ENCODE measurements at regions of chr1 and their contacts with region 1.

Region 1: GRCh38 chr1:46547481-46548383 is 3.7 kb downstream of the KNCN start:
- DNase-seq: peak; percentile 73
- H3K4me3 Mint-ChIP-seq: no peak overlapping the region
- H3K27ac Mint-ChIP-seq: no peak overlapping the region
- H3K4me1 Mint-ChIP-seq: peaks cover under 1% of the 10 kb centered on the region
- H3K27me3 Mint-ChIP-seq: peaks cover 39% of the 10 kb centered on the region
- CTCF ChIP-seq: peak; percentile 66

Region 2: DNA sequence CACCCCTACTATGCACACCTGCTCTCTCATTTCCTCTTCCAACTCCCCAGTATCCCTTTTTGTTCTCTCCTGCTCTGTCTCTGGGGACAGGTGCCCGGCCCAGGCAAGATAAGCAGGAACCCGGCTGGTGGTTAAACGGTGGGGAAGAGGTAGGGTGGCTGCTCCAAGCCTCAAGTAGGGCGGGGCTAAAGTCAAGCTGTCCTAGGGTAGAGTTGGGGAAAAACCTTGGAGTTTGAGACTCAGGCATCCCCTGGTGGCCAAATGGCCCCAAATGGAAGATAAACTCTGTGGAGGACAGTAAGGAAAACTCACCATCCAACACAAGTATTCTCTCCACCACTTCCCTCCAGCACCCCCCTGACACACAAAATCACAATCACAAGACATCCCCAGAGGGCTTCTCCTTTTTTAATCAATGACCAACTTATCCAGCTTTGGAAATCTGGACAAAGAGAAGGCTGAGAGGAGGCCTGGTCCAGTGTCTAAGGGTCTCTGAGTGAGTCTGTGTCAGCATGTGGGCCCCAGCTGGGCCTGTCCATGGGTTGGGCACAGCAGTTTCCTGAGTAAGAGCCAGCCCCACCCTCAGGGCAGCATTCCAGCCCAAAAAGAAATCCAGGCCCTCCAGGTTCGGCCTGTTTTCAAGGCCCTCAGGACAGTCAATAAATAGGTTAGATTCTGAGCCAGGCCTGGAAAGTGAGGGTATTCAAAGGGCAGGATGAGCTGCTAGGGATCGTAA is 359.3 kb before region 1 on chr1:
- CTCF ChIA-PET with region 1: no interaction called
- POLR2A ChIA-PET with region 1: no interaction called
- intact Hi-C with region 1: no loop called
- DNase-seq: no peak
- H3K4me3 Mint-ChIP-seq: no peak overlapping the region
- H3K27ac Mint-ChIP-seq: peak overlapping the region; percentile 84
- H3K4me1 Mint-ChIP-seq: peaks cover 38% of the 10 kb centered on the region
- H3K27me3 Mint-ChIP-seq: no peaks in the 10 kb centered on the region
- CTCF ChIP-seq: no peak

Region 3: GRCh38 chr1:46448109-46448911 is 99.4 kb before region 1 on chr1:
- CTCF ChIA-PET with region 1: interaction called, 62 read pairs
- POLR2A ChIA-PET with region 1: no interaction called
- intact Hi-C with region 1: loop called (anchors 1 kb)
- DNase-seq: no peak
- H3K4me3 Mint-ChIP-seq: no peak overlapping the region
- H3K27ac Mint-ChIP-seq: no peak overlapping the region
- H3K4me1 Mint-ChIP-seq: peaks cover 3% of the 10 kb centered on the region
- H3K27me3 Mint-ChIP-seq: peaks cover 20% of the 10 kb centered on the region
- CTCF ChIP-seq: no peak

Region 4: DNA sequence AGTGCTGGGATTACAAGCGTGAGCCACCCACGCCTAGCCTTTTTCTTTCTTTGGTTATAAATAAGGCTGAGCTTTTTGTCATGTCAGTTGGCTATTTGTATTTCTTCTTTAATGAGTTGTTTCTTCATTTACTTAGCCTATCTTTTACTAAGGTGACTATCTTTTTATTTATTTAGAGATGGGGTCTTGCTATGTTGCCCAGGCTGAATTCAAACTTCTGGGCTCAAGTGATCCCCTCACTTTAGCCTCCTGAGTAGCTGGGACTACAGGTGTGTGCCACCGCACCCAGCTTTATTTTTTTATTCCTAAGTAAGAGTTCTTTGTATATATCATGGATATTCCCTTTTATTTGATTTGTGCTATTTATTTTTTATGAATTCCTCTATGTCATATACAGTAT is 46.2 kb before region 1 on chr1:
- CTCF ChIA-PET with region 1: no interaction called
- POLR2A ChIA-PET with region 1: no interaction called
- intact Hi-C with region 1: no loop called
- DNase-seq: no peak
- H3K4me3 Mint-ChIP-seq: no peak overlapping the region
- H3K27ac Mint-ChIP-seq: no peak overlapping the region
- H3K4me1 Mint-ChIP-seq: no peaks in the 10 kb centered on the region
- H3K27me3 Mint-ChIP-seq: peaks cover 22% of the 10 kb centered on the region
- CTCF ChIP-seq: no peak

Region 5: GRCh38 chr1:46533179-46533864 is 14.4 kb before region 1 on chr1:
- CTCF ChIA-PET with region 1: interaction called, 68 read pairs
- POLR2A ChIA-PET with region 1: no interaction called
- intact Hi-C with region 1: no loop called
- DNase-seq: no peak
- H3K4me3 Mint-ChIP-seq: no peak overlapping the region
- H3K27ac Mint-ChIP-seq: no peak overlapping the region
- H3K4me1 Mint-ChIP-seq: peaks cover 6% of the 10 kb centered on the region
- H3K27me3 Mint-ChIP-seq: peaks cover 28% of the 10 kb centered on the region
- CTCF ChIP-seq: no peak

Measured in MCF 10A (cell line).